Activated naive CD4-positive, alpha-beta T cell treated with anti-CD3 and anti-CD28 coated beads, Interleukin-2, amount 10 ng/mL, durations not matched to agents 7 days and 5 days (primary cell): ENCODE measurements at regions of chr1 and their contacts with region 1.

Region 1: DNA sequence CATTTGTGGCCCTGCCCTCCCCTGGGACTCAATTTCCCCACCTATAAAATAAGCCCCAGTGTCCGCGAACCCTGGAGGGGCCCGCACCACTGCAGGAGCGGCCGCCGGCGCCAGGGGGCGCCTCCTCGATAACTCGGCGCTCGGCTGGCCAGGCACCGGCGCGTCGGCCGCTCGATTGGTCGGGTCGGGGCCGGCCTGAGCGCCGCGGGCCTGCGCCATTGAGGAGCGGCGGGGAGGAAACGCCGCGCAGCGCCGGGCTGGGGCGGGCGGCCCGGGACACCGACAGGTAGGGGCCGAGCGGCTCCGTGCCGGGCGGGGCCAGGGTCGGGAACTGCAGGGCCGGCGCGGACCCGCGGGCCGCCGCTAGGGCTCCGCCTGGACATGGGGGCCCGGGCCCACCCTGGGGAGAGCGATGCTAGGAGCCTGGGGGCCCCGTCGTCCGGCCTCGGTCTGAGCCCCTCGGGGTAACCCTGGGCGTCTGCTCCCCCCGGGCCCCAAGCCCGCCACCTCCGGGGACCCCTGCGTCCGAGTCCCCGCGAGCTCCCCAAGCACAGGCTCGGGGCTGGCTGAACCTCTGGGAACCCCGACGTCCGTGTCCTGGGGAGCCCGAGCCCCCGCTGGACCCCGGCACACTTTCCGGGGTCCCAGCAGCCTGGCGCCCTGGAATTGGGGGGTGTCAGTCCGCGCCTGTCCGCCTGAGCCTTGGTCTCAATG is at the start of gene VPS13D:
- DNase-seq: peak; percentile 88
- H3K4me3 Mint-ChIP-seq: peak within 1 kb of the TSS; percentile 86
- H3K27ac Mint-ChIP-seq: peak within 1 kb of the TSS; percentile 81
- H3K4me1 Mint-ChIP-seq: peaks cover 19% of the 10 kb centered on the region
- H3K27me3 Mint-ChIP-seq: peaks cover 18% of the 10 kb centered on the region

Region 2: GRCh38 chr1:12191242-12192032 is 38.6 kb before region 1 on chr1:
- CTCF ChIA-PET with region 1: no interaction called
- DNase-seq: no peak
- H3K4me3 Mint-ChIP-seq: no peak overlapping the region
- H3K27ac Mint-ChIP-seq: peak overlapping the region; percentile 60
- H3K4me1 Mint-ChIP-seq: peaks cover 48% of the 10 kb centered on the region
- H3K27me3 Mint-ChIP-seq: no peaks in the 10 kb centered on the region

Region 3: GRCh38 chr1:12244078-12244477 is 14.1 kb after region 1 on chr1:
- CTCF ChIA-PET with region 1: interaction called, 16 read pairs
- DNase-seq: peak; percentile 38
- H3K4me3 Mint-ChIP-seq: no peak overlapping the region
- H3K27ac Mint-ChIP-seq: no peak overlapping the region
- H3K4me1 Mint-ChIP-seq: no peaks in the 10 kb centered on the region
- H3K27me3 Mint-ChIP-seq: no peaks in the 10 kb centered on the region